WTC11 (cell line): ENCODE measurements at regions of chr5 and their contacts with region 1.

Region 1: GRCh38 chr5:78447775-78448424 is 87.5 kb downstream of the SCAMP1 start:
- DNase-seq: no peak
- ATAC-seq: no peak
- H3K4me3 Mint-ChIP-seq: no peak overlapping the region
- H3K27ac Mint-ChIP-seq: no peak overlapping the region
- H3K4me1 Mint-ChIP-seq: no peaks in the 10 kb centered on the region
- H3K27me3 Mint-ChIP-seq: no peaks in the 10 kb centered on the region
- CTCF ChIP-seq: no peak

Region 2: GRCh38 chr5:78420548-78420947 is 27.4 kb before region 1 on chr5:
- CTCF ChIA-PET with region 1: no interaction called
- POLR2A ChIA-PET with region 1: interaction called, 12 read pairs
- DNase-seq: no peak
- ATAC-seq: no peak
- H3K4me3 Mint-ChIP-seq: no peak overlapping the region
- H3K27ac Mint-ChIP-seq: no peak overlapping the region
- H3K4me1 Mint-ChIP-seq: no peaks in the 10 kb centered on the region
- H3K27me3 Mint-ChIP-seq: no peaks in the 10 kb centered on the region
- CTCF ChIP-seq: no peak